Activated CD8-positive, alpha-beta memory T cell treated with anti-CD3 and anti-CD28 coated beads, Interleukin-2, amount 10 ng/mL, durations not matched to agents 7 days and 5 days (primary cell): ENCODE measurements at regions of chr19 and their contacts with region 1.

Region 1: GRCh38 chr19:17605761-17606745 is 50.6 kb downstream of the COLGALT1 start:
- DNase-seq: peak; percentile 87
- ATAC-seq: peak; percentile 89
- H3K4me3 Mint-ChIP-seq: peak overlapping the region; percentile 63
- H3K27ac Mint-ChIP-seq: peak overlapping the region; percentile 9
- H3K4me1 Mint-ChIP-seq: peaks cover 7% of the 10 kb centered on the region
- H3K27me3 Mint-ChIP-seq: peaks cover 34% of the 10 kb centered on the region

Region 2: GRCh38 chr19:17582613-17583012 is 23.4 kb before region 1 on chr19:
- CTCF ChIA-PET with region 1: no interaction called
- DNase-seq: no peak
- ATAC-seq: no peak
- H3K4me3 Mint-ChIP-seq: no peak overlapping the region
- H3K27ac Mint-ChIP-seq: no peak overlapping the region
- H3K4me1 Mint-ChIP-seq: peaks cover 2% of the 10 kb centered on the region
- H3K27me3 Mint-ChIP-seq: no peaks in the 10 kb centered on the region

Region 3: GRCh38 chr19:17616961-17617806 is 11.1 kb after region 1 on chr19:
- CTCF ChIA-PET with region 1: interaction called, 16 read pairs
- DNase-seq: no peak
- ATAC-seq: no peak
- H3K4me3 Mint-ChIP-seq: no peak overlapping the region
- H3K27ac Mint-ChIP-seq: no peak overlapping the region
- H3K4me1 Mint-ChIP-seq: peaks cover 10% of the 10 kb centered on the region
- H3K27me3 Mint-ChIP-seq: peaks cover 26% of the 10 kb centered on the region

Region 4: GRCh38 chr19:17623224-17623935 is 17.3 kb after region 1 on chr19:
- CTCF ChIA-PET with region 1: interaction called, 16 read pairs
- DNase-seq: no peak
- ATAC-seq: no peak
- H3K4me3 Mint-ChIP-seq: no peak overlapping the region
- H3K27ac Mint-ChIP-seq: no peak overlapping the region
- H3K4me1 Mint-ChIP-seq: peaks cover 18% of the 10 kb centered on the region
- H3K27me3 Mint-ChIP-seq: peaks cover 6% of the 10 kb centered on the region